Activated naive CD8-positive, alpha-beta T cell treated with anti-CD3 and anti-CD28 coated beads, Interleukin-2, amount 10 ng/mL, durations not matched to agents 7 days and 5 days (primary cell): ENCODE measurements at regions of chr17 and their contacts with region 1.

Region 1: DNA sequence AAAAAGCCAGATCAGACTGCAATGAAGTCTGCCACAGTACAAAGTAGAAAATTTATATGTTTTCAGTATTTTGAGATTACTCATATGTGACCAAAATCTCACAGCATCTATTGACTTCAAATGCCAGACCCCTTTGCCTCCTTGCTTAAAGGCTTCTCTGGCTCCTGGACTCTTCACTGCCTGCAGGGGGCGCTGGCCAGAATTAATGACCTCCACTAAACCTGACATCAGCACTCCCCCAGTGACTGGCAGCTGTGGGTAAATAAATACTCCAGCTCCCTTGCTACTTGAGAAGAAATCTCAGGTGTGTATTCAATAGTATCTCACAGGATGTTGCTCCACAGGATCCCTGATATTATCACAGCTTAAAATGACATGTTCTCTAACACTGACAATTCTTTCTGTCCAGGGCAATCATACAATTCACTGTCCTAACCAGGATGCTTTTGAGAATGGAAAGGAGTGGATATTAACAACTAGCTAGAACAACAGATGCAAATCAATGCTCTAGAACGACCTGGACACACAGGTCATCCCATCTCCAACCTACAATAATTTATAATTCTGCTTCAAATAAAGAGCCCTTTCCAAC is 4.0 kb downstream of the BECN1 start:
- DNase-seq: peak; percentile 68
- ATAC-seq: peak; percentile 23
- H3K4me3 Mint-ChIP-seq: no peak overlapping the region
- H3K27ac Mint-ChIP-seq: no peak overlapping the region
- H3K4me1 Mint-ChIP-seq: peaks cover 17% of the 10 kb centered on the region
- H3K27me3 Mint-ChIP-seq: no peaks in the 10 kb centered on the region

Region 2: GRCh38 chr17:42804918-42805367 is 15.1 kb before region 1 on chr17:
- POLR2A ChIA-PET with region 1: no interaction called
- DNase-seq: no peak
- ATAC-seq: no peak
- H3K4me3 Mint-ChIP-seq: no peak overlapping the region
- H3K27ac Mint-ChIP-seq: no peak overlapping the region
- H3K4me1 Mint-ChIP-seq: no peaks in the 10 kb centered on the region
- H3K27me3 Mint-ChIP-seq: no peaks in the 10 kb centered on the region

Region 3: GRCh38 chr17:42832974-42833766 is 13.1 kb after region 1 on chr17 and contains the start of gene PSME3:
- POLR2A ChIA-PET with region 1: interaction called, 44 read pairs
- DNase-seq: peak; percentile 92
- ATAC-seq: peak; percentile 92
- H3K4me3 Mint-ChIP-seq: peak within 1 kb of the TSS; percentile 92
- H3K27ac Mint-ChIP-seq: peak within 1 kb of the TSS; percentile 97
- H3K4me1 Mint-ChIP-seq: peaks cover 19% of the 10 kb centered on the region
- H3K27me3 Mint-ChIP-seq: no peaks in the 10 kb centered on the region
- total RNA-seq, gene PSME3: 85.0 to 96.6 TPM

Region 4: GRCh38 chr17:42855048-42855596 is 35.1 kb after region 1 on chr17:
- POLR2A ChIA-PET with region 1: no interaction called
- DNase-seq: no peak
- ATAC-seq: no peak
- H3K4me3 Mint-ChIP-seq: no peak overlapping the region
- H3K27ac Mint-ChIP-seq: no peak overlapping the region
- H3K4me1 Mint-ChIP-seq: no peaks in the 10 kb centered on the region
- H3K27me3 Mint-ChIP-seq: no peaks in the 10 kb centered on the region